HAP-1 (cell line): ENCODE measurements at regions of chr19 and their contacts with region 1.

Region 1: DNA sequence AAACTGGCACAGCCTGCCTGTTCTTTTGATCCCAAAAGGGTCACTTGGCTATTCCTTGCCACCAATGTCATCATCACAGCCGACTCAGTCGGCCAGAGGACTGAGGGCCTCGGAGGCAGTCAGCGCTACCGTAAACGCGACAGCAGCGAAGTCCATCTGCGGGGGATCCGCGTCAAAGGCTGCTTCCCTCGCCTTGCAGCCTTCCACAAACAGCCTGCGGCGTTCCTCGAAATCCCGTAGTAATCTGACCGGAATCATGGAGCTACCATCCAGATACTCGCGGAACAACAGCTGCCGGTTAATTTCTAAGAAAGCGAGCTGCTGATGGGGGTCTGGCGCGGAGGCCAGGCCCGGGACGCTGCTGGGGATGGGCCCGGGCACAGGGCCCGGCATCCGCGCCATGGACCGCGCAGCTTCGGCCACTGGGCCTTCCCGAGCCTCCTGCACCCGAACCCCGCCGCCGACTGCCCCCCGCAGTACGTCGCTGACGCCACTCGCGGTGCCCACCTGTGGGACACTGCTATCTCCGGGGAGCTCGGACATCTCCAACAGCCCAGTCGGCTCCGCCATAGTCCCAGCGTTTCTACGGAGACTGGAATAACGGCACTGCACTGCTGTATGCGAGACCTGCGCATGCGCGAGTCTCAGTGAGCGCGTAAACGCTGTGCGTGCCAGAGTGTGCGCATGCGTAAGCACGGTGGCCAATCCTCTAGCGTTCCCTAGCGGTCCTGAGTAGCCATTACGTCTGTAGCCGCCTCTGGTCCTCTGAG is at the start of gene EID2B:
- DNase-seq: peak; percentile 95
- H3K4me3 ChIP-seq: peak within 1 kb of the TSS; percentile 87
- H3K4me1 ChIP-seq: peaks cover 14% of the 10 kb centered on the region
- H3K27me3 ChIP-seq: no peaks in the 10 kb centered on the region

Region 2: DNA sequence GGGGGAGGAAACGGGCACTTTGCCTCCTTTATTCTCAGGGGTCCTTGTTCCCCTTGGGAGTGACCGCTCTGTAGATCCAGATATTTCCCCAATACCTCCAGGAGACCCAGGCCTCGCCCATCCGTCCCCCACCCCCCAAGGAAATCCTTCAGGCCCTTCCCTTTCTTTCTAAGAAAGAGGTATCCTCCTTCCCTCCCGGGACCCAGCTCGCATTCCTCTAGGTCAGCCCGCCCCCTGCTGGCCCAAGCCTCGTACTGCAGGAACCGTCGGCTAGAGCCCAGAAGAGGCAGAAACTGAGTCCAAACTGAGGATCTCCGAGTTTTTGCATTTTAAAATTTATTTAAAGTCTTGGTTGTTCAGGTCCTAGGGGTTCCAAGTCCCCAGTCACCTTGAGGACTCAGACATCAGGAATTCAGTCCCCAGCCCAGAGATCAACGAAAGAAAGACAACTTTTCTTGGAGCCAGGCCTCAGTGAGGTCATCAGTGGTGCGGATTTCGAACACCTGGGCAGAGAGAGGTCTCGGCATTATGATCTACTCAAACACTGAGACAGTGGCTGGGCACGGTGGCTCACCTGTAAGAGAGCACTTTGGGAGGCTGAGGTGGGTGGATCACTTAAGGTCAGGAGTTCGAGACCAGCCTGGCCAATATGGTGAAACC is 204.2 kb before region 1 on chr19:
- in situ Hi-C with region 1: no loop called
- DNase-seq: peak; percentile 45 to 92
- H3K4me3 ChIP-seq: no peak overlapping the region
- H3K4me1 ChIP-seq: no peaks in the 10 kb centered on the region
- H3K27me3 ChIP-seq: no peaks in the 10 kb centered on the region

Region 3: DNA sequence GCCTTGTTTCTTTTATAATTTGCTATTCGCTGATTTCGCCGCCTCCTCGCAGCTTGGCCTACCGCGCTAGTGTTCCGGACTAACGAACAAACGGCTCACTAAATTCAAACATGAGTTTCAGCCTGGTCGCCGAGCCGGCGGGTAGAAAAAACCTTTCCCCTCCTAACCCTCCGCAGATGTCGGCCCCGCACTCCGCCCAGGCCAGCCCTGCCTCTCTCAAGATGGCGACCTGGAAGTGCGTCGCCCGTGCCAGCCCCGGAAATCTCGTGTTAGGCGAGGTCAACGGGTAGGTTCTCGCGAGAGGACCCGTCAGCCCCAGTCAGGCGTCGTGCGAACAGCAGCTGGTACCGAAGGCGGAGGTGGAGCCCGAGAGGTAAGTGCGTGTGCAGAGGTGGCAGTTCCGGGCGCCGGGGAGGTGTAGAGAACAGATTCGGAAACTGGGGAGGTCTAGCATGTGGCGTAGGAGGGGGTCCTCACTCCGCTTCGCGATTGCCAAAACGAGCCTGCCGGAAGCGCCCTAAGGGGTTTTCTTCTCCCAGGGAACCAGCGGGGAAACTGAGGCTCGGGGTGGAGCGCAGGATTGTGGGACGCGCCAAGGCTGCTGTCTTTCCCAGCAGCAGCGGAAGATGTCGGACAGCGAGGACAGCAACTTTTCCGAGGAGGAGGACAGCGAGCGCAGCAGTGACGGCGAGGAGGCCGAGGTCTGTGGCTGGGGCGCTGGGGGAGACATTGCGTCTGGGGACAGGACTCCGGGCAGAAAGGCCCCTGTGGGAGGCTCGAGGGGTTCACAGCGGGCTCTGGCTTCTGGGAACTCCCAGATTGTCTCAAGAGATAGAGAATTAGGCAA is 86.9 kb before region 1 on chr19 and contains the start of gene SUPT5H:
- in situ Hi-C with region 1: loop called (anchors 10 kb)
- DNase-seq: peak; percentile 94 to 98
- H3K4me3 ChIP-seq: peak within 1 kb of the TSS; percentile 82
- H3K4me1 ChIP-seq: peaks cover 6% of the 10 kb centered on the region
- H3K27me3 ChIP-seq: no peaks in the 10 kb centered on the region

Region 4: GRCh38 chr19:39469036-39469435 is 63.4 kb before region 1 on chr19:
- in situ Hi-C with region 1: no loop called
- DNase-seq: no peak
- H3K4me3 ChIP-seq: no peak overlapping the region
- H3K4me1 ChIP-seq: no peaks in the 10 kb centered on the region
- H3K27me3 ChIP-seq: no peaks in the 10 kb centered on the region

Region 5: GRCh38 chr19:39479916-39480315 is 52.5 kb before region 1 on chr19:
- in situ Hi-C with region 1: loop called (anchors 5 kb)
- DNase-seq: no peak
- H3K4me3 ChIP-seq: peak overlapping the region; percentile 96
- H3K4me1 ChIP-seq: peaks cover 17% of the 10 kb centered on the region
- H3K27me3 ChIP-seq: no peaks in the 10 kb centered on the region

Region 6: DNA sequence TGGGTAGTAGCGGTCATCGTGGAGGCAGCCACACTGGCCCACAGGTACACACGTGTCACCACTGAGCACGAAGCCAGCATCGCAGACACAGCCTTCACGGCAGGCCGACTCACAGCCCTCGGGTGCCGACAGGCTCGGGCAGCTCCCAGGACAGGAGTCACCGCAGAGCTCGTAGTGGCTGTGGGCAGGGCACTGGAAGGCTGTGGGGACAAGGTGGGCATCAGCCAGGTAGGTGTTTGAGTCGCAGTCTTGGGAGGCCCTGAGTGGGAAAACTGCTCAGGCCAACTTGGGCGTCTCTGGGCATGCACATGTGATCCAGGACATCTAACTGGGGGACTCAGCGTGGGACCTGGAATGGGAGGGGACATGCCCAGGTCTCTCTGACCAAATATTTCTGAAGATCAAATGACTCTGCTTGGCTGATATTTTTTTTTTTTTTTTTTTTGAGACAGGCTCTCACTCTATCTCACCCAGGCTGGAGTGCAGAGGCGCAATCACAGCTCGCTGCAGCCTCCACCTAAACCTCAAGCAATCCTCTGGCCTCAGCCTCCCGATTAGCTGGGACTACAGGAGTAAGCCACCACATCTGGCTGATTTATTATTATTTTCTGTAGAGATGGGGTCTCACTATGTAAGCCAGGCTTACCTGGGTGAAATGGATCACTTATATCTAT is 357.6 kb after region 1 on chr19:
- in situ Hi-C with region 1: no loop called
- DNase-seq: no peak
- H3K4me3 ChIP-seq: no peak overlapping the region
- H3K4me1 ChIP-seq: no peaks in the 10 kb centered on the region
- H3K27me3 ChIP-seq: no peaks in the 10 kb centered on the region

Region 7: DNA sequence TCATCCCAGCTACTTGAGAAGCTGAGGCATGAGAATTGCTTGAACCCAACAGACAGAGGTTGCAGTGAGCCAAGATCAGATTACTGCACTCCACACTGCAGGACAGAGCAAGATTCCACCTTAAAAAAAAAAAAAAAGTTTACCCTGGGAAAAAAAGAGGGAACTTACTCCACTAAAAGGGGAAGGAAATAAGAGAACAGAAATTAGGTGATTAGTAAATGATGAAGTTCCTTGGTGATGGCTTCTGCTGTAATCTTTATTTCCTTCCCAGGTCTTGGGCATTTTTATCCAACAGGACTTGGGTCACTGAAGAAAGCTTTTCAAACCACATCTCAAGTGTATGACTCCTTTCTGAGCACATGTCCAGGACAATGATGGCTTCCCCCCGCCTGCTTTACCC is 549.0 kb after region 1 on chr19:
- in situ Hi-C with region 1: no loop called
- DNase-seq: no peak
- H3K4me3 ChIP-seq: no peak overlapping the region
- H3K4me1 ChIP-seq: no peaks in the 10 kb centered on the region
- H3K27me3 ChIP-seq: no peaks in the 10 kb centered on the region